Cardiac septum (tissue), 1 donor: ENCODE measurements at regions of chr11 and their contacts with region 1.

Region 1: DNA sequence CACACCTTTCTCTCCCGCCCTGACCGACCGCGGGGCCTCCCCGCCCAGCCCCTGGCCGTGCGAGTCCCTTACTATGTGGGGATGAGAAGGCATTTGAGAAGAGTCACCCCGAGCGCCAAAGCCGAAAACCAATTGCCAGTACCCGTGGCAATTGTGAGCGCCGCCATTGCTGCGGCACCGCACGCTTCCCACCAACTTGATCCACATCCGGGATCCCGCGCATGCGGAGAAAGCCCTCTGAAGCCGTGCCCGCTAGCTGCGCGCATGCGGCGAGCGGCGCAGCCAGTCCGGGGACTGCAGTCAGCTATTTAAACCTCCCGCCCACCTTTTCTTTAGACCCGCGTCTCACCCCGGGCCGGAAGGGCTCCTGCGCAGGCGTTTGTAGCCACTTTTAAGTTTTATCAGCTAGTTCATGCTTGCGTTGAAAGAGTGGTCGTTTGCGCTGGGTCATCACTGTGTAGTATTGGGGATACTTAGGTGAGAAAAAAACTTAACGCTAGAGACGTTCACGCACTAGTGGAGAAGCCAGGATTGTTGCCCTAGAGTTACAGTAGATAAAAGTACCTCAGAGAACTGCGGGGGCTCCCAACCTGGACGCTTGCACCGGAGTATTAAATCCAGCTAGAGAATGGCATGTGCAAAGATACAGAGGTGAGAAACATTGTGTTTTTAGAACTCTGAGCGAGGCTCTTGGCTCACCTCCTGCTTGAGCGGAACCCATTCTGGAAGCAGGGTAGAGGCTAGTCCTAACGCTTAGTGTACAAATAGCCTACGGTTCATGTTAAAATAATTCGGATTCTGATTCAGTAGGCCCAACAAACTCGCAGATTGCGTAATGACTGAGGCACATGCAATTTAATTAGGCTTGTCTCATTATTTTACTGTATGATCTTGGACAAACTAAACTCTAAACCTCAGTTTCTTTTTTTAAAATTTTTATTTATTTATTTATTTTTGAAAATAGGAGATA is at the start of gene ALG8:
- DNase-seq: peak; percentile 98
- total RNA-seq, gene ALG8: 15.4 TPM

Region 2: DNA sequence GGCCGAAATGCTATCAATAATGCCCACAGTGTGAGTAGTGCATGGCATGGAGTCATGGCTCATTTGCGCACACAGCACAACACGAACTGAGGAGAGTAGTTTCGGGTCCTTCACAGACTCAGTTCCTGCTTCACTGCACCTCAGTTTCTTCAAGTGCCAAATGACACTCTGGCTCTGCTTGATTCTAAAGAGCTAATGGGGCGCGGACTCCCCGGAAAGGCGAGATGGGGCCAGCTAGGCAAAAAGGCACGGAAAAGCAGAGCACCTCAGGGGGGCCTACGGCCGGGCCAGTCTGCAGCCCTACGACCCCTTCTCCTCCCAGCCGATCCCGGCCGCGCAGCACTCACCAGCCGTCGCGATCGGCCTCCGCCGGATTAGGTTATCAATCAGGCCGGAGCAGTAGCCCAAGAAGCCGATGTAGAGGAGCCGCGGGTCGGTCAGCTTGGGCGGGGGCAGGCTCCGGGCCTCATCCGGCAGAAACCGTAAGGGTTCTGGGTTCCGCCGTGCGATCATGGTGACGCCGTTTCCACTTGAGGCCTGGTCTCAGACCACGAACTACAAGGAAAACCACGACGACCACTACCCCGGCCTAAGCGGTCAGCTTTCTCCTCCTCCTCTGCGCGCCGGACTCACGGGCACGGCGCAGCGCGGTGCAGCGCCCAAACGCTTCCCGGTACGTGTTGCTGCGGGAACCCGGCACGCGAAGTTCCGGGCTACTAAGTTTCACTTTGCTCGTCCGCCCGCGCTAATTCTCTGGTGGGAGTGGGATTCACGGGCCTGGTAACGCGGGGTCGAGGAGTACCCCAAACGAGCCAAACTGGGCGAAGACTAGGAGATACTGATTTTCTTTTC is 60.2 kb before region 1 on chr11 and contains the start of gene NDUFC2:
- intact Hi-C with region 1: loop called (anchors 5 kb)
- DNase-seq: peak; percentile 89
- total RNA-seq, gene NDUFC2: 225 TPM

Region 3: DNA sequence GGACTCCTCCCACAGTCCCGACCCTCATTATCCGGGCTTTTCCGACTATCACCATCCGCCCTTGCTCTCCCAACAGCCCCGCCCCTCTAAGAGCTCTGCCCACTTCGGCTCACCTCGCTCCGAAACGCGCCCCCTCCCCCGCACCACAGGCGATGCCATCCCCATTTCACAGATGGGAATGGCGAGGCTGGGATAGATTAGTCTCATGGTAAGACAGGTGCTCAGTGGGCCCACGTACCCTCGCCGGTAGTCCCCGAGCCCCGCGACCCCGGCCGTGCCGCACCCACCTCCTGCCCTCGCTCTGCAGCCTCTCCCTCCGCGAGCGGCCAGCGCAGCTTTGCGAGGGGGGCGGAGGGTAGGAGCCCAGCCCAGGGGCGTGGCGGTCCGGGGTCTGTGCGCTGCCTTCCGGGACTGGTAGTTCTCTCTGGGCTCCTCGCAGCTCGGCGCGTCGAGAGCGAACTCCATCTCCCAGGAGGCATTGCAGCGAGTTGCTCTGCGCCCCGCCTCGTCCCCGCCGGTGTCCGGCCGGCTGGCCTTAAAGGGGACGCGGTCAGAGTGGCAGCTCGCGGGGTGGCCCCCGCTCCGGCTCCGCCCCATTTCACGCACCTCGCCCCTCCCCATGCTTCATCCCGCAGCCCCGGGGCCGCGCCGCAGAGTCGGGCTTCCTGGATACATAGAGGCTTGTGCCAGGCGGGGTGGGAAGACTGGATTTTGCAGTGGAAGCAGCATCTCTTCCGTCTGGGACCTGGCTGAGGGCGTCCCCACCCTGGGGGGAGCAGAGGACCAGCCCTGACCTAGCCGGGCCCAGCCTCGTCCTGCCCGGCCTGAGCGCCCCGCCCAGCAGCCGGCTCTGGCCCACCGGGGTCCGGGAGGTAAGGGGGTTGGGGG is 48.8 kb after region 1 on chr11 and contains the starts of genes KCTD21 and USP35:
- intact Hi-C with region 1: loop called (anchors 5 kb)
- DNase-seq: peak; percentile 100
- total RNA-seq, gene KCTD21: 8.5 TPM
- total RNA-seq, gene USP35: 8.9 TPM